ENCODE measurements at regions of chr2 and their contacts with region 1.

Region 1: DNA sequence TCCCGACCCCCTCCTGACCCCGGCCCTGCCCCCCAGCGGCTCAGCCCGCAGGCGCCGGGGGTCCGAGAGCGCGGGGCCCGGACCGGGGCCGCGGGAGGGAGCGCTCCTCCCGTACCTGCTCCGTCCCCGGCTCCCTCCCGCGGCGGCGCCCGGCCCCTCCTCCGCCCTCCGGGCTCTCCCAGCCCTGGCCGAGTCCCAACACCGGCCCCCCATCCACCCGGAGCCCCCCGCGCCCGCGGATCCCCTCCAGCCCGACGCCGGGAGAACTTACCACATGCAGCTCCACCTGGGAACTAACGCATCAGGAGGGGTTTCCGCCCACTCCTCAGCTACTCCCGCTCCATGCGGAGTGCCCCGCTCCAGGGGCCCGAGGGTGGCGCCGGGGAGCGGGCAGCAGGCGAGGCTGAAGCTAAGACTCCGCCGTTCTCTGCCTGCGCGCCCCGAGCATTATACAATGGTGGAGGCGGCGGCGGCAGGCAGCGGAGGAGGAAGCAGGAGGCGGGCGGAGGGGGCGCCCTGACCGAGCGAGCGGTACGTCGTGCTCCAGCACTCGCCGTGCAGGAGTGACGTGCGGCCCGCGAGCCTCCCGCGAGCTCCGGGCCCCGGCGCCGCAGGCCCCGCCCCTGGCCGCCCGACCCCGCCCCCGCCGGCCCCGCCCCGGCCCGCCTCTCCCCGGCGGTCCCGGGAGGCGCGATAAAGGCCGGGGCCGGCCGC is at the start of gene SERTAD2:
- DNase-seq: peak; percentile 91 to 92
- H3K4me3 ChIP-seq: peak within 1 kb of the TSS; percentile 92
- H3K4me3 Mint-ChIP-seq: peak within 1 kb of the TSS; percentile 91
- H3K27ac Mint-ChIP-seq: peak within 1 kb of the TSS; percentile 82
- H3K4me1 ChIP-seq: peaks cover 34% of the 10 kb centered on the region
- H3K4me1 Mint-ChIP-seq: peaks cover 44% of the 10 kb centered on the region
- H3K27me3 ChIP-seq: no peaks in the 10 kb centered on the region
- H3K27me3 Mint-ChIP-seq: no peaks in the 10 kb centered on the region
- CTCF ChIP-seq: peak in 1 of 2 experiments; percentile 12
- total RNA-seq, gene SERTAD2: 25.1 and 25.8 TPM in 2 replicates

Region 2: DNA sequence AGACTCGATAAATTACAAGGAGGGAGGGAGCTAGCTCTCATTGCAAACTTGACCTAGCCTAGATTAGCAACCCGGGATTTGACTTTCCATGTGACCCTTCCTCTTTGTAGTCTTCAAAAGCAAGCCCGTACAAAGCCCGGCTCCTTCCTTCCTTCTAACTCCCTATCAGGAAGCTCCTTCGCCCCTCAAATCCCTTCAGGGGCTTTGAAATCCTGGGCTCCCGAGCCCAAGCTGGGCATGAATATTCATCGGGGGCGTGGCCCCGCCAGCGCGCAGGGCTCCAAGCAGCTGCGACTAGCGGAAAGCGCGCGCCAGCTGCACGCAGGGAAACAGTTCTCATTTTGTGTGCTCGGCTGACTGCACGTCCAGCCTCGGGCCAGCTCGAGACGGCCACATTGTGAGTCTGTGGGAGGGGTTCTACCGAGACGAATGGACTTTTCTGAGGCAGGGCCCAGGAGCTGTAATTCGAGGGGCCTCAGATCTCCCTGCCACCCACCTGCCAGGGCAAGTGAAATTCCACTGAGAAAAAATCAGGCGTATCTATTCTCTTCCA is 425.3 kb before region 1 on chr2:
- CTCF ChIA-PET with region 1: no interaction called
- POLR2A ChIA-PET with region 1: no interaction called
- intact Hi-C with region 1: no loop called
- DNase-seq: peak; percentile 79 to 80
- H3K4me3 ChIP-seq: peak overlapping the region; percentile 45
- H3K4me3 Mint-ChIP-seq: peak overlapping the region; percentile 89
- H3K27ac Mint-ChIP-seq: peak overlapping the region; percentile 73
- H3K4me1 ChIP-seq: 0 out of 2 replicates have a peak, but pooled peaks cover 5% of the 10 kb centered on the region
- H3K4me1 Mint-ChIP-seq: peaks cover 14% of the 10 kb centered on the region
- H3K27me3 ChIP-seq: no peaks in the 10 kb centered on the region
- H3K27me3 Mint-ChIP-seq: no peaks in the 10 kb centered on the region
- CTCF ChIP-seq: no peak

Region 3: DNA sequence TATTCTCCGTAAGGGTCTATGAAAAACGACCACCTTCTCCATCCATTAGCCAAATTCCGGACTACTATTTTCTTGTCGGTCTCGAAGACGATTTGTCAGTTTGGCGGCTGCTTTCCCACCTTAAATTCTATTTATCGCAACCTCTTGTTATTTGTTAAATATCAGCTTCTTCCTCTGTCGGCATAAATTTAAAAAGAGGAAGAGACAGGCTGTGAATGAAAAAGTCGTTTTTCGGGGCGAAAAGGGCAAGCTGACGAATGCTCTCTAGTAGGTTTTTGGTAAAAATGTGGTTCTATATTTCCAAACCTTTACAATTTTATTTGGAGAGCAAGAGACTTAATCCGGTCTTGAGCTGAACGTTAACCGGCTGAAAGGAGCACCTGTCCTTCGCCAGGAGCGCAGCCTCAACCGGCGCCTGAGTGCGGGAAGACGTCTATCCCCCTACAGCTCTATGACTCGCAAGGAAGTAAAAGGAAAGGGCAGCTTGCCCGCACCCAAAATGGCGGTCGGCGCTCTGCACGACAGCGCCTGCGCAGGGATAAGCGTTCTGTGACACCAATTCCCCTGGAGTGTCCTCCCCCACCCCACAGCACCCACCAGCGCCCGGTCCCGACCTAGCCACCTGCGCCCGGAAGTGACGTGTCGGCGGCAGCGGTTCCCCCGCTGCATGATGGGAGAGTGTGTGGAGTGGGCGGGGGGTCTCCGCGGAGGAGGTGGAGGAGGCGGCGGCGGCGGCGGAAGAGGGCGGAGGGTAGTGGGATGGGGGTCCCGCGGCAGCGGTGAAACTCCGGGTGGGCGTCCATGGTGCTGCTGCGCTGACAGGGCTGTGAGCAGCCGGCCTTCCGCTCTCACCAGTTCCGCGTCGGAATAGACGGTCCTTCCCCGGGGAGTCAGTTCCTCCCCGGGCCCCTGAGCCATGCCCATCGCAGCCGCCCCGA is 129.6 kb before region 1 on chr2 and contains the start of gene AFTPH:
- CTCF ChIA-PET with region 1: interaction called, 6 read pairs
- POLR2A ChIA-PET with region 1: interaction called, 11 read pairs
- intact Hi-C with region 1: loop called (anchors 10 kb)
- DNase-seq: peak; percentile 99 to 100
- H3K4me3 ChIP-seq: peak within 1 kb of the TSS; percentile 95
- H3K4me3 Mint-ChIP-seq: peak within 1 kb of the TSS; percentile 87
- H3K27ac Mint-ChIP-seq: peak within 1 kb of the TSS; percentile 94
- H3K4me1 ChIP-seq: peaks cover 4% of the 10 kb centered on the region; the same call in 1 of the 2 replicates
- H3K4me1 Mint-ChIP-seq: no peaks in the 10 kb centered on the region
- H3K27me3 ChIP-seq: no peaks in the 10 kb centered on the region
- H3K27me3 Mint-ChIP-seq: peaks cover 2% of the 10 kb centered on the region
- CTCF ChIP-seq: no peak
- total RNA-seq, gene AFTPH: 29.3 and 30.1 TPM in 2 replicates

Region 4: DNA sequence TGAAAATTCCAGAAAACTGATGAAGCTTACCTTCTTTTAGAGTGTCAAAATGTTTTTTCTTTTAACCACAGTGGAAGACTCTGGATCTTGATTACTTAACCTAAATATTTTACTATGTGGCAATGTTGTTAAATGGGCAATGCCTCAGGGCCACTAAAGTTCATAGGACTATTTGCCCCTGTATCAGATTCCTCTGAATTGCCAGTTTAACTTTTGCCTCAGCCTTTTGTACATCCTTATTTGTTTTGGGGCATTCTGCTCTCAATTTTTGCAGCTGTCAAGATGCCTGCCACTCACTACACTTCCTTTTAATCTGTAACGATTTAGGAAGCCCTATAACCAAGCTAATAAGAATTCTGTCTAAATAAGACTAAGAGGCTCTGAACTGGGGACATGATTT is 31.9 kb after region 1 on chr2:
- CTCF ChIA-PET with region 1: no interaction called
- POLR2A ChIA-PET with region 1: interaction called, 10 read pairs
- intact Hi-C with region 1: loop called (anchors 2 kb)
- DNase-seq: peak in 1 of 2 experiments; percentile 23
- H3K4me3 ChIP-seq: no peak overlapping the region
- H3K4me3 Mint-ChIP-seq: no peak overlapping the region
- H3K27ac Mint-ChIP-seq: no peak overlapping the region
- H3K4me1 ChIP-seq: peaks cover 21% of the 10 kb centered on the region
- H3K4me1 Mint-ChIP-seq: peaks cover 17% of the 10 kb centered on the region
- H3K27me3 ChIP-seq: no peaks in the 10 kb centered on the region
- H3K27me3 Mint-ChIP-seq: no peaks in the 10 kb centered on the region
- CTCF ChIP-seq: no peak

Region 5: GRCh38 chr2:64698668-64699444 is 45.4 kb after region 1 on chr2:
- CTCF ChIA-PET with region 1: interaction called, 3 read pairs
- POLR2A ChIA-PET with region 1: interaction called, 5 read pairs
- intact Hi-C with region 1: loop called (anchors 2 kb)
- DNase-seq: no peak
- H3K4me3 ChIP-seq: no peak overlapping the region
- H3K4me3 Mint-ChIP-seq: no peak overlapping the region
- H3K27ac Mint-ChIP-seq: peak overlapping the region; percentile 1
- H3K4me1 ChIP-seq: peaks cover 26% of the 10 kb centered on the region
- H3K4me1 Mint-ChIP-seq: peaks cover 31% of the 10 kb centered on the region
- H3K27me3 ChIP-seq: no peaks in the 10 kb centered on the region
- H3K27me3 Mint-ChIP-seq: no peaks in the 10 kb centered on the region
- CTCF ChIP-seq: no peak

Region 6: DNA sequence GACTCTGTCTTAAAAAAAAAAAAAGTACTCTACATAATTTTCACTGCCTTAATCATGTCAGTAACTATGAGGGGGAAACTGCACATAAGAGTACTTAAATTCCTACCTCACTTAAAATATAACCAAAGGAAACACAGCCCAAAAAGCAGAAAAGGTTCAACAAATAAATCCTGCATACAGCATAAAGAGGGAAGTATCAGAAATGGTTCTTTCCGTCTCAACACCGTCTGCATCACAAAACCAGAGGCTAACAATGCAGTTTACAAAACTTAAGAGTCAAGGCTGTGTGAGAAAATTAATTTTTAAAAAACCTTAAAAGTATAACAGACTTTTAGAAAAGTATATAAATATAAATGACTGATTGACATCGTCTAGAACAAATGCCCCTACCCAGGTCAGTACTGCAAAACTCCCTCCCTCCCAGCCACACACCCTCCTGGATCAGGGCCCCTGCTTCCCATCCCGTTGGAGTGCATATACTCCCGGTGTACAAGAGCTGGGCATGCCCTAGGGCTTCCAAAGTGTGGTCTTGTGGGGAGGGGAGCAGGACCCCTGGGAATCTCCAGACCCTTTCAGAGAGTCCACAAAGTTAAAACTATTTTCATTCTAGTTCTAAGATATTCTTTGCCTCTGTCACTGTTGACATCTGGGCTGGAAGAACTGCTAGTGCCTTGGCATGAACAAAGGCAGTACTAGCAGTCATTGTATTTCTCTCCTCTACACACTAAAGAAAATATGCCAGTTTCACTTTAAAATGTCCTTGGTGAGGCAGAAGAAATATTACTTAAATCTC is 67.2 kb after region 1 on chr2:
- CTCF ChIA-PET with region 1: no interaction called
- POLR2A ChIA-PET with region 1: interaction called, 13 read pairs
- intact Hi-C with region 1: loop called (anchors 2 kb)
- DNase-seq: no peak
- H3K4me3 ChIP-seq: no peak overlapping the region
- H3K4me3 Mint-ChIP-seq: no peak overlapping the region
- H3K27ac Mint-ChIP-seq: no peak overlapping the region
- H3K4me1 ChIP-seq: peaks cover 14% of the 10 kb centered on the region
- H3K4me1 Mint-ChIP-seq: no peaks in the 10 kb centered on the region
- H3K27me3 ChIP-seq: no peaks in the 10 kb centered on the region
- H3K27me3 Mint-ChIP-seq: no peaks in the 10 kb centered on the region
- CTCF ChIP-seq: no peak

Region 7: DNA sequence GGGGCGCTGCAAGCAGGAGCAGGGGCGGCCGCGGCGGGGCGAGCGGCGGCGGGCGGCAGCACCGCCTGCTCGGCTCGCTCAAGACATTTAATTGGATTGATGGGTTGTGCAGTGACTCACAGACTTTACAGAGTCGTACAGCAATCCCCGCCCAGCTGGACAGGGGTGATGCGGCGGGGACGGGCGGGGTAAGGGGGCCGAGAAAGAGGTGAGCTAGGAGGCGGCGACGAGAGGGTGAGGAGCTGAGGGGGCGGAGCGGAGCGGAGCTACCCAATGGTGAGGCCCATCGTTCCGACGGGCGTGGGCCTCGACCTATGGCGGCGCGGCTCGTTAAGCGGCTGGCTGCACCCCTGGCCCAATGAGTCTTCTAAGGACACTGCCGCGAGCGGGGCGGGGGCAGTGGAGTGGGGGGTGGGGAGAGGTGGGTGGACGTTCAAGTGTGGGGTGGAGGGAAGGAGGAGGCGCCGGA is 97.3 kb after region 1 on chr2:
- CTCF ChIA-PET with region 1: interaction called, 31 read pairs
- POLR2A ChIA-PET with region 1: interaction called, 98 read pairs
- intact Hi-C with region 1: loop called (anchors 1 kb)
- DNase-seq: peak; percentile 99
- H3K4me3 ChIP-seq: peak overlapping the region; percentile 73
- H3K4me3 Mint-ChIP-seq: peak overlapping the region; percentile 96
- H3K27ac Mint-ChIP-seq: peak overlapping the region; percentile 93
- H3K4me1 ChIP-seq: peaks cover 18% of the 10 kb centered on the region; the same call in 1 of the 2 replicates
- H3K4me1 Mint-ChIP-seq: peaks cover 16% of the 10 kb centered on the region
- H3K27me3 ChIP-seq: no peaks in the 10 kb centered on the region
- H3K27me3 Mint-ChIP-seq: no peaks in the 10 kb centered on the region
- CTCF ChIP-seq: no peak

Region 8: GRCh38 chr2:64767670-64768468 is 114.4 kb after region 1 on chr2:
- CTCF ChIA-PET with region 1: interaction called, 9 read pairs
- POLR2A ChIA-PET with region 1: interaction called, 19 read pairs
- intact Hi-C with region 1: loop called (anchors 2 kb)
- DNase-seq: peak; percentile 89 to 90
- H3K4me3 ChIP-seq: peak overlapping the region; percentile 47
- H3K4me3 Mint-ChIP-seq: peak overlapping the region; percentile 78
- H3K27ac Mint-ChIP-seq: peak overlapping the region; percentile 84
- H3K4me1 ChIP-seq: peaks cover 28% of the 10 kb centered on the region
- H3K4me1 Mint-ChIP-seq: peaks cover 27% of the 10 kb centered on the region
- H3K27me3 ChIP-seq: no peaks in the 10 kb centered on the region
- H3K27me3 Mint-ChIP-seq: no peaks in the 10 kb centered on the region
- CTCF ChIP-seq: no peak